BJ (cell line): ENCODE measurements at regions of chr1 and their contacts with region 1.

Region 1: GRCh38 chr1:206878456-206878855 is 13.0 kb downstream of the IL20 start:
- DNase-seq: no peak
- H3K4me3 ChIP-seq: no peak overlapping the region
- H3K27me3 ChIP-seq: no peaks in the 10 kb centered on the region
- CTCF ChIP-seq: no peak; the same call in 1 of the 2 replicates

Region 2: GRCh38 chr1:206766251-206766856 is 112.1 kb before region 1 on chr1:
- CTCF ChIA-PET with region 1: no interaction called
- POLR2A ChIA-PET with region 1: no interaction called
- DNase-seq: peak; percentile 47
- H3K4me3 ChIP-seq: no peak overlapping the region
- H3K27me3 ChIP-seq: peaks cover 6% of the 10 kb centered on the region
- CTCF ChIP-seq: no peak

Region 3: GRCh38 chr1:206865013-206865671 is 13.3 kb before region 1 on chr1 and contains the start of gene IL20:
- CTCF ChIA-PET with region 1: interaction called, 11 read pairs
- POLR2A ChIA-PET with region 1: no interaction called
- DNase-seq: no peak
- H3K4me3 ChIP-seq: no peak within 1 kb of the TSS
- H3K27me3 ChIP-seq: peaks cover 7% of the 10 kb centered on the region; the same call in 1 of the 2 replicates
- CTCF ChIP-seq: peak; percentile 92
- polyA plus RNA-seq, gene IL20: not detected in 2 replicates

Region 4: GRCh38 chr1:206925106-206925736 is 46.8 kb after region 1 on chr1:
- CTCF ChIA-PET with region 1: no interaction called
- POLR2A ChIA-PET with region 1: no interaction called
- DNase-seq: no peak
- H3K4me3 ChIP-seq: no peak overlapping the region
- H3K27me3 ChIP-seq: no peaks in the 10 kb centered on the region; the same call in 1 of the 2 replicates
- CTCF ChIP-seq: no peak